ENCODE measurements at regions of chr11 and their contacts with region 1.

Region 1: GRCh38 chr11:123246749-123247495 is 51.9 kb upstream of the CLMP start:
- DNase-seq: peak; percentile 90
- ATAC-seq: peak; percentile 87
- H3K4me3 Mint-ChIP-seq: no peak overlapping the region
- H3K27ac Mint-ChIP-seq: no peak overlapping the region
- H3K4me1 Mint-ChIP-seq: peaks cover 22% of the 10 kb centered on the region
- H3K27me3 Mint-ChIP-seq: peaks cover 3% of the 10 kb centered on the region; the same call in 1 of the 2 replicates
- CTCF ChIP-seq: peak; percentile 93

Region 2: DNA sequence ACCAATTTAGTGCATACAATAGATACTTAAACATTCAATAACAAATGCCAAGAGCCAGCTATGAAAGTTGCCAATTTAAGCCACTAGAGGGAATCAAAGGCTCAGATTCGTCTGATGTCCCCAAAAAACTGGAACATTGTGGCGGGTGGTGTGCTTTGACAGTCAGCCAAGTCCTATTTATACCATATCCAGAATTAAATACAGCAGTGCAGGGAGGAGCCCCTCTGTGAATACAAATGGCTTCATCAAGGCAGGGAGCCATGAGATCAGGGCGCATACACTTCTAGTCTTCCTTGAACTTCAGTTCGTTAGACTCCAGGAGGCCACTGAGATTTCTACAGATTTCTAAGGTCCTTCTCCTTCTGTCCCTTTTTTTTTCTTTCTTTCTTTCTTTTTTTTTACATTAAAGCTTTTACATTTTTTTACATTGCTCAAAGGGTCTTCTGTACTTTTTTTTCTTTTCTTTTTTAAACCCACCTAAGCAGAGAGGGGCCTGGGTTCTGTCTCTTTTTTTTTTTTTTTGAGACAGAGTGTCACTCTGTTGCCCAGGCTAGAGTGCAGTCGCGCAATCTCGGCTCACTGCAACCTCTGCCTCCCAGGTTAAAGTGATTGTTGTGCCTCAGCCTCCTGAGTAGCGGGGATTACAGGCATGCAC is 143.5 kb before region 1 on chr11:
- CTCF ChIA-PET with region 1: interaction called, 197 read pairs
- POLR2A ChIA-PET with region 1: no interaction called
- DNase-seq: peak; percentile 22
- ATAC-seq: peak; percentile 65
- H3K4me3 Mint-ChIP-seq: no peak overlapping the region
- H3K27ac Mint-ChIP-seq: 0 out of 2 replicates have a peak overlapping the region, but pooled peaks have one; percentile 41
- H3K4me1 Mint-ChIP-seq: peaks cover 27% of the 10 kb centered on the region
- H3K27me3 Mint-ChIP-seq: no peaks in the 10 kb centered on the region
- CTCF ChIP-seq: peak; percentile 46

Region 3: GRCh38 chr11:123145220-123145619 is 101.7 kb before region 1 on chr11:
- CTCF ChIA-PET with region 1: interaction called, 10 read pairs
- POLR2A ChIA-PET with region 1: no interaction called
- DNase-seq: no peak
- ATAC-seq: peak; percentile 13
- H3K4me3 Mint-ChIP-seq: no peak overlapping the region
- H3K27ac Mint-ChIP-seq: no peak overlapping the region
- H3K4me1 Mint-ChIP-seq: peaks cover 23% of the 10 kb centered on the region
- H3K27me3 Mint-ChIP-seq: no peaks in the 10 kb centered on the region; the same call in 1 of the 2 replicates
- CTCF ChIP-seq: no peak

Region 4: DNA sequence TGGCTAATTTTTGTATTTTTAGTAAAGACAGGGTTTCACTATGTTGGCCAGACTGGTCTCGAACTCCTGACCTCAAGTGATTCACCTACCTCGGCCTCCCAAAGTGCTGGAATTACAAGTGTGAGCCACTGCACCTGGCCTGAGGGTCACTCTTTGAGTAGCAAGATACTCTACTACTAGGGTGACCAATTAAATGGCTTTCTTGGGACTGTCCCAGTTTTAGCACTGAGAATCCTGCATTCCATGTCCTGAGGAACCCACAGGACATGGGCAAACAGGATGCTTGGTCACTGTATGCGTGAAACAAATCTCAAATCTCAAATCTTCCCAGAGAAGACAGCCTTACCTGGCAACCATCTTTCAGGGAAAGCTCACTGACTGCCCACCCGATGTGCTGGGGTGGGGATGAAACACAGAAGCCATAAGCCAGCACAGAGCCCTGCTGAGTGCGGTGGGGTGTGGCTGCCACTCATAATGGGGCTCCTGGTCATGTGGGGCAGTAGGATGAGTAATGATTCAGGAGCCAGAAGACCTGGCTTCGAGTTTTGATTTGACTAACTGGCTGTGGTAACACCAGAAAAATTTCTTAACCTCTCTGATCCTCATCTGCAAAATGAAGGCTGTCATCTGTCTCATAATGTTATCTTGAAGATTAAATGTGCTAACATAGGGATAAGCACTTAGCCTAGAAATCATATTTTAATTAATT is 63.4 kb before region 1 on chr11:
- CTCF ChIA-PET with region 1: interaction called, 19 read pairs
- POLR2A ChIA-PET with region 1: no interaction called
- DNase-seq: no peak
- ATAC-seq: no peak
- H3K4me3 Mint-ChIP-seq: no peak overlapping the region
- H3K27ac Mint-ChIP-seq: no peak overlapping the region
- H3K4me1 Mint-ChIP-seq: peaks cover 69% of the 10 kb centered on the region
- H3K27me3 Mint-ChIP-seq: no peaks in the 10 kb centered on the region
- CTCF ChIP-seq: no peak

Region 5: DNA sequence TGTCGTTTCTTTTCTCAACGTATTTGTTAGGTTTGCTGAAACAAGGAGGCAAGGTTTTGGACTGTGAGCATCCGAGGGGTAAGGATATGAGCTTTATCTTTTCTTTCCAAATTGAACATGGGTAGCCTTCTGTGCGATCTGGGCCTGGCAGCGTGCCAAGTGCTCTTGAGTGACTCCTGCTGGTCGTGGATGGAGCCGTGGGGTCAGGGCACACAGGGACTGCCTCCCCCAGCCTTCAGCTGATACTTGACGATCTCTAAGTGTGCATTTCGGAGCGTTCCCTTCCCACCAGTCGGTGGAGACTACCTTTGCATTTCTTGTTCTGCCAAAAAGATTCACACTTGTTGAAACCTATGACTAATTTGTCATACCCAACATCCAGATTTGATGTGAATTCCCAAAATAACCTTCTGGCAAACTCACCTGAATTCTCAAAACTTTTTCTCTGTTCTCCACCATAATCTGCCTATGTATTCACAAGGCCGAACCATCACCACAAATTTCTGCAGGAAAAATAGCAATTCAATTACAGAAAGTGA is 11.7 kb before region 1 on chr11:
- CTCF ChIA-PET with region 1: interaction called, 31 read pairs
- POLR2A ChIA-PET with region 1: no interaction called
- DNase-seq: peak; percentile 75
- ATAC-seq: peak; percentile 93
- H3K4me3 Mint-ChIP-seq: no peak overlapping the region
- H3K27ac Mint-ChIP-seq: no peak overlapping the region
- H3K4me1 Mint-ChIP-seq: peaks cover 7% of the 10 kb centered on the region; the same call in 1 of the 2 replicates
- H3K27me3 Mint-ChIP-seq: peaks cover 3% of the 10 kb centered on the region; the same call in 1 of the 2 replicates
- CTCF ChIP-seq: peak; percentile 58